BJ (cell line): ENCODE measurements at regions of chr2 and their contacts with region 1.

Region 1: DNA sequence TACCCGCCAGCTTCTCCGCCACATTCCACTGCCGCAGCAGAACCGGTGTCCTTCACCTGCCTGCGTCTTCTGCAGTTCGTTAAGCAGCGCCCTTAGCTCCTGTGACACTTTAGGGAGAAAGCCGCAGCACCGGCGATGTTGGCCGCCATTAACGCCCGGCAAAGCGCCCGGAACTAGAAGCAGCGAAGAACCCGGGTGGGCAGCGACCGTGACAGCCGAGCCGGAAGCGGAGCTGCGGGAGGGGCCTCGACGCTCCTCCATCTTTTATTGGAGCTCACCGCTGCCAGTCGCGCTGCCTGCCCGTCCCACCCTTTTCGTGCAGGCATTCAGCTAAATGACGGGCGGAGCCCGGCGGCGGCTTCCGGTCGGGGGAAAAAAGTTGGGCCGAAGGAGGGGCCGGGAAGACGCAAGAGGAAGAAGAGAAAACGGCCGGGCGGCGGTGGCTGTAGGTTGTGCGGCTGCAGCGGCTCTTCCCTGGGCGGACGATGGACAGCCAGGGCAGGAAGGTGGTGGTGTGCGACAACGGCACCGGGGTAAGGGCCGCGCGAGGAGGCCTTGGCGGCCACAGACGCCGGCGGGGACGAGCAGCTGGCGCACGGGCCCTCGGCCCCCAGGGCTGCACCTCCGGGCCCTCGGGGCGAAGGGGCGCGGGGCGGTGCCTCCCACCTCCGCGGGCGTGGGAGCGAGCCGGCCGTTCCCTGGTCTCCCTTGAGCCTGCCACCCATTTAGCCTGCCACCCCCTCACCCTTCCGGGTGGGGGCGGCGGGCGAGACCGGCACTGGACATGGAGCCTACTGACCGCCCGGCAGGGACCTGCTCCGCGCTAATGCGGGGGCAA is at the start of gene ACTR2:
- DNase-seq: peak; percentile 86
- H3K4me3 ChIP-seq: peak within 1 kb of the TSS; percentile 56
- H3K27me3 ChIP-seq: no peaks in the 10 kb centered on the region
- CTCF ChIP-seq: no peak
- polyA plus RNA-seq, gene ACTR2: 57.9 and 153 TPM in 2 replicates

Region 2: GRCh38 chr2:64295326-64296139 is 932.1 kb before region 1 on chr2:
- CTCF ChIA-PET with region 1: no interaction called
- POLR2A ChIA-PET with region 1: interaction called, 14 read pairs
- DNase-seq: no peak
- H3K4me3 ChIP-seq: no peak overlapping the region
- H3K27me3 ChIP-seq: peaks cover 11% of the 10 kb centered on the region
- CTCF ChIP-seq: no peak

Region 3: GRCh38 chr2:64568836-64569235 is 658.8 kb before region 1 on chr2:
- CTCF ChIA-PET with region 1: no interaction called
- POLR2A ChIA-PET with region 1: no interaction called
- DNase-seq: no peak
- H3K4me3 ChIP-seq: no peak overlapping the region
- H3K27me3 ChIP-seq: no peaks in the 10 kb centered on the region
- CTCF ChIP-seq: no peak

Region 4: GRCh38 chr2:64942693-64943092 is 285.0 kb before region 1 on chr2:
- CTCF ChIA-PET with region 1: no interaction called
- POLR2A ChIA-PET with region 1: interaction called, 20 read pairs
- DNase-seq: no peak
- H3K4me3 ChIP-seq: no peak overlapping the region
- H3K27me3 ChIP-seq: peaks cover 6% of the 10 kb centered on the region
- CTCF ChIP-seq: no peak

Region 5: GRCh38 chr2:65164426-65164891 is 63.2 kb before region 1 on chr2:
- CTCF ChIA-PET with region 1: no interaction called
- POLR2A ChIA-PET with region 1: no interaction called
- DNase-seq: no peak
- H3K4me3 ChIP-seq: no peak overlapping the region
- H3K27me3 ChIP-seq: no peaks in the 10 kb centered on the region
- CTCF ChIP-seq: no peak

Region 6: GRCh38 chr2:65294701-65295100 is 67.1 kb after region 1 on chr2:
- CTCF ChIA-PET with region 1: no interaction called
- POLR2A ChIA-PET with region 1: no interaction called
- DNase-seq: no peak
- H3K4me3 ChIP-seq: no peak overlapping the region
- H3K27me3 ChIP-seq: peaks cover 1% of the 10 kb centered on the region; the same call in 1 of the 2 replicates
- CTCF ChIP-seq: no peak

Region 7: GRCh38 chr2:65358678-65359400 is 131.2 kb after region 1 on chr2:
- CTCF ChIA-PET with region 1: no interaction called
- POLR2A ChIA-PET with region 1: interaction called, 21 read pairs
- DNase-seq: no peak
- H3K4me3 ChIP-seq: no peak overlapping the region
- H3K27me3 ChIP-seq: no peaks in the 10 kb centered on the region
- CTCF ChIP-seq: no peak

Region 8: DNA sequence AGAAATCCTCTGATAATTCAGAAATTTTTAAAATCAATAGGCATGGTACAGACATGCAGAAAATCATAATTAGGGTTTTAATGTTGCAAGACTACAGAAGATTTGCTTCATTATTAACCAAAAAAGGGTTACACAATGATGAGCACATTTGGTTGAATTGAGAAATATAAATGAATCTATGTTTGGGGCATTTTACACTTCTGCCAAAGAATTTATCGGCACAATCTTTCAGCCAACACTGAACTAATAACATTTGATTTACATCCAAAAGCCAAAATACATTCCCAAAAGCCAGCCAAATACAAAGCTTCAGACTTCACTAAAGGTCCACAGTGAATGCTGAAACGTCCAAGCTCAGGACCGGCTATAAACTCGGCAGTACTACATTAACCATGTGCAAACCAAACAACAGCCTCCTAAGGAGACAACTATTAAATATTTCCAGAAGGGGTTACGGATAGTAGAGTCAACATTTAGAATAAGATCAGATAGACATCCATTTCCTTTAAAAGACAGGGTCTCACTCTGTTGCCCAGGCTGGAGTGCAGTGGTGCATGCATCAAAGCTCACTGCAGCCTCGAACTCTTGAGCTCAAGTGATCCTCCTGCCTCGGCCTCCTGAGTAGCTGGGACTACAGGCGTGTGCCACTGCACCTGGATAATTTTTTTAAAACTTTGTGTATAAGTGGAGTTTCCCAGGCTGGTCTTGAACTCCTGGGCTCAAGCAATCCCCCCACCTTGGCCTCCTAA is 175.3 kb after region 1 on chr2:
- CTCF ChIA-PET with region 1: interaction called, 3 read pairs
- POLR2A ChIA-PET with region 1: interaction called, 13 read pairs
- DNase-seq: no peak
- H3K4me3 ChIP-seq: no peak overlapping the region
- H3K27me3 ChIP-seq: no peaks in the 10 kb centered on the region
- CTCF ChIP-seq: no peak

Region 9: DNA sequence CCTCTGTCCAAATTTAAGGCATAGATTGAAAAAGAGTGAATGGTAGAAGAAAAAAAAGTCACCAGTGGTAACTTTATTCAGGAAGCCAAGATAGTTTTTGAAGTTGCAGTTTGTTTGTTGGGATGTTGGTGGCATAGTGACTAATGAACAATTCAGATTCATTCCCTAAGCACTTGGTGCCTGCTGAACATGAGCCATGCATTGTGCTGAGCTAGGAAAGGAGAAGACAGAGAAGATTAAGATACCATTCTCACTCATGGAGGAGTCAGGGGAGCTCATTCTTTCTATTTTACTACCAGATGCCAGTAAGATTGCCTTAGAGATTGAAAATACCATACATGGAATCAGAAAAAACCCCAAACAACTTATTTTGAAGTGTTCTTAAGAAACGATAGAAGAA is 1232.4 kb after region 1 on chr2:
- CTCF ChIA-PET with region 1: no interaction called
- POLR2A ChIA-PET with region 1: interaction called, 14 read pairs
- DNase-seq: no peak
- H3K4me3 ChIP-seq: no peak overlapping the region
- H3K27me3 ChIP-seq: no peaks in the 10 kb centered on the region
- CTCF ChIP-seq: no peak